Mucosa of descending colon (tissue), 3 donors: ENCODE measurements at regions of chr11 and their contacts with region 1.

Region 1: GRCh38 chr11:9015677-9016076 is 11.9 kb upstream of the NRIP3 start:
- DNase-seq: peak in 2 of 3 donors; percentile 42 to 75
- ATAC-seq: peak; percentile 91
- H3K4me3 ChIP-seq: no peak overlapping the region
- H3K4me1 ChIP-seq: no peaks in the 10 kb centered on the region
- CTCF ChIP-seq: peak; percentile 58

Region 2: GRCh38 chr11:9137293-9138132 is 121.8 kb after region 1 on chr11:
- intact Hi-C with region 1: loop called (anchors 5 kb)
- DNase-seq: peak; percentile 78 to 88 (median 87)
- ATAC-seq: peak; percentile 98
- H3K4me3 ChIP-seq: no peak overlapping the region
- H3K4me1 ChIP-seq: peaks cover 13% of the 10 kb centered on the region
- CTCF ChIP-seq: peak; percentile 91